ENCODE measurements at regions of chr17 and their contacts with region 1.

Region 1: GRCh38 chr17:57747221-57748017 is 2.3 kb upstream of the CCDC182 start:
- DNase-seq: no peak
- ATAC-seq: peak; percentile 79
- H3K4me3 Mint-ChIP-seq: no peak overlapping the region
- H3K27ac Mint-ChIP-seq: no peak overlapping the region
- H3K4me1 Mint-ChIP-seq: peaks cover 4% of the 10 kb centered on the region
- H3K27me3 Mint-ChIP-seq: no peaks in the 10 kb centered on the region; the same call in 1 of the 2 replicates
- CTCF ChIP-seq: peak; percentile 43

Region 2: DNA sequence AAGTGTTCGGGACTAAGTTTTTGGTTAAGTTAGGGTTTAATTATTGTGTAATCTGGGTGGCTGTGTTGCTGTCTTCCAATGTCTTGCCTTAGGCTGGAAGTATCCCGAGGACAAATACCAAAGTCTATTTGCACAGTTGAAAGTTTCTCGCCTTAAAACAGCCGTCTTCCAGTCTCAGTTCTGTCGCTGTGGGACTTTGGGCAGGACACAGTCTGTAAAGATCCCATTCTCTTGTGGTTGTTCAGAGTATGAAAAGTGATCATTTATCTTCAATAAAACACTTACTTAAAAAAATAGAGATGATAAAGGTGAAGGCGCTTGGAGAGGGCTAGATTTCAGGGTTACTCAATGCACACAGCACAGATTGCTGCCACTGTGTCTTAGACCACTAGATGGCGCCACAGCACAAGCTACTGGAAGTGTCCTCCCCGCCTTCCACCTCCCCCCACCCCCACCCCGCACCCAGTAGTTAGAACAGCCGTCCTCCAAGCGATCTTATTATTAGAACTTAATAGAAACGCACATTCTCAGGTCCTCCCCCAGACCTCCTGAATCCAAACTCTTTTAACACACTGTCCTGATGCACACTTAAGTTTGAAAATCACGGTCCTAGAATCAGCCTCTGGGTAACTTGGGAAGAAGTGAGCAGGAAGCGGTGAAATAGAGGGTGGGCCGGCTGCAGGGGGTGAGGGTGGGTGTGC is 616.5 kb before region 1 on chr17:
- CTCF ChIA-PET with region 1: interaction called, 25 read pairs
- POLR2A ChIA-PET with region 1: no interaction called
- DNase-seq: peak; percentile 88
- ATAC-seq: peak; percentile 76
- H3K4me3 Mint-ChIP-seq: no peak overlapping the region
- H3K27ac Mint-ChIP-seq: no peak overlapping the region
- H3K4me1 Mint-ChIP-seq: peaks cover 30% of the 10 kb centered on the region
- H3K27me3 Mint-ChIP-seq: no peaks in the 10 kb centered on the region
- CTCF ChIP-seq: peak; percentile 92

Region 3: DNA sequence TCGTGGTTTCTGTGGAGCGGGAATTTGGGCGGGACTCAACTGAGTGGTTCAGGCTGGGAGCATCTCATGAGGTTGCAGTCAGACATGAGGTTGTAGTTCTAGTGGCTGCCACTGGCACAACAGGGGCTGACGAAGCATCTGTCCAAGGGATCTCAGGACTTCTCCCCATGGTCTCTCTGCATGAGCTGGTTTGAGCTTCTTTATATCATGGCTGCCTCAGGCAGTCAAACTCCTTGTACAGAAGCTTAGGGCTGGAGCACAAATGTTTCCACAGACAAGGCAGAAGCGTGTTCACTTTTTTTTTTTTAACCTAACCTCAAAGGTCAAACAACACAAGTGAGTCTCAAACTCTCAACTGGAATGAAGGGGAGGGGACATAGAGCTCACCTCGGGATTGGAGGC is 247.8 kb before region 1 on chr17:
- CTCF ChIA-PET with region 1: no interaction called
- POLR2A ChIA-PET with region 1: no interaction called
- DNase-seq: no peak
- ATAC-seq: peak; percentile 39; the same call in 1 of the 2 replicates
- H3K4me3 Mint-ChIP-seq: no peak overlapping the region
- H3K27ac Mint-ChIP-seq: no peak overlapping the region
- H3K4me1 Mint-ChIP-seq: peaks cover 12% of the 10 kb centered on the region
- H3K27me3 Mint-ChIP-seq: no peaks in the 10 kb centered on the region
- CTCF ChIP-seq: no peak

Region 4: DNA sequence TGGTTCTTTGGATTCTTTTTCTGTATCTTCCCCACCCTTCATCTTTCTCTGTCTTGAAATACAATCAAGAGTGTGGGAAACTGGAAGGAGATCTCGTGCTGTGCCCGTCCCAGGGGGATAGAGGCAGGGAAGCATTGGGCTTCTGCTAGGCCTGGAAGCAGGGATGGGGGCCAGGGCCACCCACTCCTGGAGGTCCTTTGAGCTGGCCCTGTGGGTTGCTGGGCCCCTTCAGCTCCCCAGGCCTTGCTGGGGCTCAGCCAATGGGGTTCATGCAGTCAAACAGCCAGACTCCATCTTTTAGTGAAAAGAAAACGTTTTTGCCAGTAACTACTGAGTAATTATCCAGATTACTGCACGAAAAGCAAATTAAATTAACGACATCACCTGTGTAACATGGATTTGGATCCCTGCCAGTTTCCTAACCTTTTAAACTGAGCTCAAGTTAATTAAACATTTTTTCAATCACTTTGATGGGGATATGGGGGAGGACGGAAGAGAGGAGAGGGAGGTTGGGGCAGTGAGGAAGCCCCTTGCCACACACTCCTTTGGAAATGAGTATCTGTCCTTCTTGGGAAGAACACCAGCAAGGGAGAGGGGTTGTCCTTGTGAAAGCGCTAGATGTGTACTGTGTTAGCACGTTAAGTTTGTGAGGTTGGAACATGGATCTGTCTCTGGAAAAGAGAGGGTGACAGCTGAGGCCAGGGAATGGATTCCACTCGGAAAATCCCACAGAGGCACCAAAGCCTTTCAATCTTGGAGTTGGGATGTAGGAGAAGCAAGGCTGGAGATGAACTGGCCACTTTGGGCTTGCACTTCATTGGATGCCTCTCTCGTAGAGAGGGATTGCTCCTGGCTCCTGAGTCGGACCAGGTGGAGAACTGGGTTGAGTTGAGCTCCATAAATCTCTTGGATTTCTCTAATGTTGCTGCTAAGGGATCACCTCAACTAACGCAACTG is 69.8 kb before region 1 on chr17:
- CTCF ChIA-PET with region 1: interaction called, 10 read pairs
- POLR2A ChIA-PET with region 1: no interaction called
- DNase-seq: no peak
- ATAC-seq: no peak
- H3K4me3 Mint-ChIP-seq: no peak overlapping the region
- H3K27ac Mint-ChIP-seq: no peak overlapping the region
- H3K4me1 Mint-ChIP-seq: peaks cover 10% of the 10 kb centered on the region
- H3K27me3 Mint-ChIP-seq: no peaks in the 10 kb centered on the region
- CTCF ChIP-seq: no peak

Region 5: DNA sequence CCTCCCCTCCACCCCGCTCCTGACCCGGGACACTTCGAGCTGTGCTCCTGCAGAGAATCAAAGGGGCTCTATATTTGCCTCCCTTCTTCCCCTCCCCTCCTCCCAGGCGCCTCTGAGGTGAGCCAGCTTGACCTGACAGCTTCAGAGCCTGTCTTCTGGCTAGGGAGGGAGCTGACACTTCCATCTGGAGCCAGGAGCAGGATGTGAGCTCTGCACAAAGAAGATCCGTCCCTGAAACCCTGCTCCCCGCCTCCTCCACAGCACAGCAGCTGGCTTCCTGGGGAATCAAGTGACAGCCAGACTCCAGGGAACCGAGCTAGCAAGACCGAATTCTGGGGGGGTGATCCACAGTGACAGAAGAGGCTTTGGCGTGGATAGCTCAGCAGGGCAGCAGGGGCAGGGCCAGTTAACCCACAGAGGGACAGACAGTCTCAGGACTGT is 39.5 kb before region 1 on chr17:
- CTCF ChIA-PET with region 1: interaction called, 11 read pairs
- POLR2A ChIA-PET with region 1: no interaction called
- DNase-seq: peak; percentile 39
- ATAC-seq: peak; percentile 90
- H3K4me3 Mint-ChIP-seq: peak overlapping the region; percentile 46
- H3K27ac Mint-ChIP-seq: no peak overlapping the region
- H3K4me1 Mint-ChIP-seq: peaks cover 19% of the 10 kb centered on the region
- H3K27me3 Mint-ChIP-seq: peaks cover 14% of the 10 kb centered on the region
- CTCF ChIP-seq: no peak

Region 6: GRCh38 chr17:57761887-57762286 is 14.5 kb after region 1 on chr17:
- CTCF ChIA-PET with region 1: interaction called, 14 read pairs
- POLR2A ChIA-PET with region 1: interaction called, 3 read pairs
- DNase-seq: no peak
- ATAC-seq: peak; percentile 45
- H3K4me3 Mint-ChIP-seq: no peak overlapping the region
- H3K27ac Mint-ChIP-seq: no peak overlapping the region
- H3K4me1 Mint-ChIP-seq: peaks cover 19% of the 10 kb centered on the region
- H3K27me3 Mint-ChIP-seq: peaks cover 6% of the 10 kb centered on the region; the same call in 1 of the 2 replicates
- CTCF ChIP-seq: no peak

Region 7: GRCh38 chr17:57819285-57819684 is 71.9 kb after region 1 on chr17:
- CTCF ChIA-PET with region 1: no interaction called
- POLR2A ChIA-PET with region 1: no interaction called
- DNase-seq: no peak
- ATAC-seq: no peak
- H3K4me3 Mint-ChIP-seq: no peak overlapping the region
- H3K27ac Mint-ChIP-seq: no peak overlapping the region
- H3K4me1 Mint-ChIP-seq: peaks cover 11% of the 10 kb centered on the region
- H3K27me3 Mint-ChIP-seq: peaks cover 2% of the 10 kb centered on the region; the same call in 1 of the 2 replicates
- CTCF ChIP-seq: no peak

Measured in WTC11 (cell line).